Breast epithelium (tissue), 4 donors: ENCODE measurements at regions of chr7 and their contacts with region 1.

Region 1: GRCh38 chr7:3548815-3549214 is 247.8 kb downstream of the SDK1 start:
- DNase-seq: no peak
- H3K4me3 ChIP-seq: no peak overlapping the region
- H3K27ac ChIP-seq: no peak overlapping the region
- H3K4me1 ChIP-seq: no peaks in the 10 kb centered on the region
- H3K27me3 ChIP-seq: no peaks in the 10 kb centered on the region
- CTCF ChIP-seq: no peak
- POLR2A ChIP-seq: no peak

Region 2: GRCh38 chr7:3493499-3493898 is 55.3 kb before region 1 on chr7:
- intact Hi-C with region 1: loop called (anchors 2 kb)
- DNase-seq: no peak
- H3K4me3 ChIP-seq: no peak overlapping the region
- H3K27ac ChIP-seq: no peak overlapping the region
- H3K4me1 ChIP-seq: no peaks in the 10 kb centered on the region
- H3K27me3 ChIP-seq: no peaks in the 10 kb centered on the region
- CTCF ChIP-seq: no peak
- POLR2A ChIP-seq: no peak